ENCODE measurements at regions of chr11 and their contacts with region 1.

Region 1: GRCh38 chr11:126989942-126990715 is 10.4 kb downstream of the KIRREL3 start:
- DNase-seq: peak in 1 of 2 experiments; percentile 71
- H3K4me3 ChIP-seq: no peak overlapping the region
- H3K27ac ChIP-seq: no peak overlapping the region
- H3K4me1 ChIP-seq: no peaks in the 10 kb centered on the region
- H3K27me3 ChIP-seq: peaks cover 54% of the 10 kb centered on the region
- CTCF ChIP-seq: peak; percentile 92

Region 2: DNA sequence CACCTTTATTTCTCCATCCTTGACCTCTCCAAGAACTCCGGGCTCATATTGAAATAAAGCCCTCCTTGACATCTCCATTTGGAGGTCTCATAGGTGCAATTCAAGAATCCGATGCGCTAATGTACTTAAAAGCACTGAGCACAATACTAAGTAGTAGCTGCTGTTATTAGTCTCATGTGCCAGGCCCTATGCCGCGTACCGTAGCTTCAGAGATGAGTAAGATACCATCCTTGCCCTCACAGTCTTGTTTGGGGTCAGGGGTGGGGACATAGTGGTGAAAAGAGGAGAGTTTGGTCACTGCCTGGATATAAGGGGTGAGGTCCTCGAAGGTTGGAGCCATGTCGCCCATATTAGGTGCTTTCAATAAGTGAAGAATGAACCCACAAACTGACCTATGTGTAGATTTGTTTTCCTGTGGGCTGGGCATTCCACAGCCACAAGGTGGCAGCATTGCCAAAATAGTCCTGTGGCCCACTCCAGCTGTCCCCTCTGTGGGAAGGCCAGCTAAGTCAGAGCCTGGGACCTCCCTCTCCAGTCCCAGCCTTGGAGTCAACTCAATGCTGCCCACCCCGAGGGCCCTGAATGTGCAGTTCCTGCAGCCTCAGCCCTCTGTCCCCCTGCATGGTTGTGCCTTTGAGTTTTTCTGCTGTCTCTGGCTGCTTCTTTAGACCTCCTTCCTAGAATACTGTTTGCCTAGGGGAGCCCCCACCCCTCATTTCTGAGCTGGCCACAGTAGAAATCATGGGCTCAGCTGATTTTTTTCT is 679.7 kb before region 1 on chr11:
- CTCF ChIA-PET with region 1: interaction called, 3 read pairs
- POLR2A ChIA-PET with region 1: no interaction called
- intact Hi-C with region 1: loop called (anchors 5 kb)
- DNase-seq: peak; percentile 65 to 73
- H3K4me3 ChIP-seq: no peak overlapping the region
- H3K27ac ChIP-seq: no peak overlapping the region
- H3K4me1 ChIP-seq: peaks cover 3% of the 10 kb centered on the region; the same call in 1 of the 2 replicates
- H3K27me3 ChIP-seq: no peaks in the 10 kb centered on the region
- CTCF ChIP-seq: peak; percentile 94

Region 3: GRCh38 chr11:126440792-126441514 is 549.2 kb before region 1 on chr11:
- CTCF ChIA-PET with region 1: no interaction called
- POLR2A ChIA-PET with region 1: no interaction called
- intact Hi-C with region 1: loop called (anchors 2 kb)
- DNase-seq: peak; percentile 52 to 80
- H3K4me3 ChIP-seq: no peak overlapping the region
- H3K27ac ChIP-seq: no peak overlapping the region
- H3K4me1 ChIP-seq: peaks cover 3% of the 10 kb centered on the region; the same call in 1 of the 2 replicates
- H3K27me3 ChIP-seq: no peaks in the 10 kb centered on the region
- CTCF ChIP-seq: peak; percentile 98

Region 4: DNA sequence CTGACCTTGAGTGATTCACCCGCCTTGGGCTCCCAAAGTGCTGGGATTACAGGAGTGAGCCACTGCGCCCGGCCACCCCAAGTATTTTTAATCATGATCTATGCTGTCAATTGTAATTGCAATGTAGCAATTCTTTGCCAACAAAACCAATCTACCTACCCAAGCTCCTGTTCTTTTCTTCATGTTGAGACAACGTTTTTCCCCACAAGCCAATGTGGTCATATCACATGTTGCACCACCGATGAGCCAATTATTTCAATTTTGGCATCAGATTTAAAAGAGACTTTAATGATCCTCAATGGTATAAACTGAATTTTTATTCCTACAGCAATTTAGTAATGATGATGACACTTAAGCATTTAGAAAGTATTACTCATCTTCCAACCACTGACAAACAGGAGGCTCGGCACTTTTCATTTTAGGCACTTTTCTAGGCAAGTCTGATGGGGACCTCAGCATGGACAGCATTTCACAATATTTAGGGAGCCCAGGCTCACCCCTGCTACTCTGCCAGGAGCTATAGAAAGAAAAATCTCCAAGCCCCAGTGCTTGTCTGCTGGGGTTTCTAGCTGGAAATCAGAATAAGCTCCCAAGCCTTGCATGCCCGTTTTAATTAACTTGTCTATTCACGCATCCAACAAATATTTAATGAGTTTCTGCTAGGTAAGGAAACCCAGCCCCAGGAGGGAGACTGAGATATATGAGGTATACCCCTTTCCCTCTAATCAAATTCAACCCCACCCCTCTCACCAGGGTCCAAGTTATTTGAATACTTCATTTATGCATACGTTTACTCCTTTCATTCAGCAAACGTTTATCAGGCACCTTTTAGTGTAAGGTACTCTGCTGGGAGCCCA is 343.2 kb before region 1 on chr11:
- CTCF ChIA-PET with region 1: no interaction called
- POLR2A ChIA-PET with region 1: interaction called, 10 read pairs
- intact Hi-C with region 1: no loop called
- DNase-seq: no peak
- H3K4me3 ChIP-seq: no peak overlapping the region
- H3K27ac ChIP-seq: no peak overlapping the region
- H3K4me1 ChIP-seq: no peaks in the 10 kb centered on the region
- H3K27me3 ChIP-seq: peaks cover 7% of the 10 kb centered on the region; the same call in 1 of the 2 replicates
- CTCF ChIP-seq: no peak

Region 5: GRCh38 chr11:126808836-126809235 is 181.3 kb before region 1 on chr11:
- CTCF ChIA-PET with region 1: no interaction called
- POLR2A ChIA-PET with region 1: no interaction called
- intact Hi-C with region 1: no loop called
- DNase-seq: no peak
- H3K4me3 ChIP-seq: no peak overlapping the region
- H3K27ac ChIP-seq: no peak overlapping the region
- H3K4me1 ChIP-seq: no peaks in the 10 kb centered on the region
- H3K27me3 ChIP-seq: peaks cover 49% of the 10 kb centered on the region
- CTCF ChIP-seq: no peak

Region 6: GRCh38 chr11:126874831-126875230 is 115.3 kb before region 1 on chr11:
- CTCF ChIA-PET with region 1: interaction called, 11 read pairs
- POLR2A ChIA-PET with region 1: no interaction called
- intact Hi-C with region 1: no loop called
- DNase-seq: no peak
- H3K4me3 ChIP-seq: no peak overlapping the region
- H3K27ac ChIP-seq: no peak overlapping the region
- H3K4me1 ChIP-seq: no peaks in the 10 kb centered on the region
- H3K27me3 ChIP-seq: peaks cover 11% of the 10 kb centered on the region
- CTCF ChIP-seq: no peak

Region 7: DNA sequence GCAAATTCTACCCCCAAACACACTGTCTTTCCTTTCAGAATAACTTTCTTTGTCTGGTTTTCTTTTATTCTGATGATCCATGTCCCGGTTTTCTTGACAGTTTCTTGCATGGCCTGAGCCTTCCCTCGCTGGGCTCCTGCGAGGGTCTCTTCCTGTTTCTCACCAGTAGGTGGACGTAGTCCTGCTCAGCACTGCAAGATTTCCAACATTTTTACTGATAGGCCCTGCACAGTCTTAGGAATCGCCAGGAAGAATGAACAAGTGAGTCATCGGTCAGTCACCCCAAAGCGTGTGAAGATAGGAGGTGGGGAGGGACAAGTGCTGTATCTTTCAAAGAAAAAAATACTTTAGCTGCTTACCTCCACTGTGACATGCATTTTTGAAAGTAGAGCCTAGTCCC is 27.4 kb after region 1 on chr11:
- CTCF ChIA-PET with region 1: no interaction called
- POLR2A ChIA-PET with region 1: interaction called, 6 read pairs
- intact Hi-C with region 1: loop called (anchors 1 kb)
- DNase-seq: peak in 1 of 2 experiments; percentile 65
- H3K4me3 ChIP-seq: no peak overlapping the region
- H3K27ac ChIP-seq: no peak overlapping the region
- H3K4me1 ChIP-seq: no peaks in the 10 kb centered on the region
- H3K27me3 ChIP-seq: no peaks in the 10 kb centered on the region
- CTCF ChIP-seq: 0 out of 2 replicates have a peak, but pooled peaks have one; percentile 24

Region 8: DNA sequence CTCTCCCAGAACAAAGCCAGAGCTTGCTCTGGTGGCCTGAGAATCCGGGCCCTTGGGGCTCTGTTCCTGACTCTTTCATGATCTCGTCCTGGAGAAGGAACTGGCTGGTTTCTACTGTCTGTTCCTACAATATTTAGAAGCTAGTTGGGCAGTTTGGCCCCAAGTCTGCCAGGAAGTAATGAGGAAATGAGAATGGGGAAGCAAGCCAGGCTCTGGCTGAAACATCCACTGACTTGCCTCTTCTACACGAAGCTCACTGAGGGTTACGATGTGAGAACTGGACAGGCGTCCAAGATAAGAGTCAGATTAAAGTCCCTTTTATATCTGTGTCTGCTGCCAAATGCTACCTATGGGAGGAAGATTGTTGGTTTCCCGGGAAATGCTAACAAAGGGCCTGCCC is 120.4 kb after region 1 on chr11:
- CTCF ChIA-PET with region 1: no interaction called
- POLR2A ChIA-PET with region 1: no interaction called
- intact Hi-C with region 1: no loop called
- DNase-seq: no peak
- H3K4me3 ChIP-seq: no peak overlapping the region
- H3K27ac ChIP-seq: no peak overlapping the region
- H3K4me1 ChIP-seq: no peaks in the 10 kb centered on the region
- H3K27me3 ChIP-seq: peaks cover 43% of the 10 kb centered on the region
- CTCF ChIP-seq: no peak

Measured in PC-9 (cell line).